GM12878 (cell line): ENCODE measurements at regions of chr6 and their contacts with region 1.

Region 1: GRCh38 chr6:35786810-35787209 is 6.0 kb downstream of the CLPSL1 start:
- DNase-seq: no peak
- ATAC-seq: no peak
- H3K4me3 ChIP-seq: no peak overlapping the region
- H3K27ac ChIP-seq: no peak overlapping the region
- H3K4me1 ChIP-seq: no peaks in the 10 kb centered on the region
- H3K27me3 ChIP-seq: peaks cover 1 to 4% of the 10 kb centered on the region in 2 experiments
- CTCF ChIP-seq: no peak
- EP300 ChIP-seq: no peak
- POLR2A ChIP-seq: no peak
- RAD21 ChIP-seq: no peak

Region 2: DNA sequence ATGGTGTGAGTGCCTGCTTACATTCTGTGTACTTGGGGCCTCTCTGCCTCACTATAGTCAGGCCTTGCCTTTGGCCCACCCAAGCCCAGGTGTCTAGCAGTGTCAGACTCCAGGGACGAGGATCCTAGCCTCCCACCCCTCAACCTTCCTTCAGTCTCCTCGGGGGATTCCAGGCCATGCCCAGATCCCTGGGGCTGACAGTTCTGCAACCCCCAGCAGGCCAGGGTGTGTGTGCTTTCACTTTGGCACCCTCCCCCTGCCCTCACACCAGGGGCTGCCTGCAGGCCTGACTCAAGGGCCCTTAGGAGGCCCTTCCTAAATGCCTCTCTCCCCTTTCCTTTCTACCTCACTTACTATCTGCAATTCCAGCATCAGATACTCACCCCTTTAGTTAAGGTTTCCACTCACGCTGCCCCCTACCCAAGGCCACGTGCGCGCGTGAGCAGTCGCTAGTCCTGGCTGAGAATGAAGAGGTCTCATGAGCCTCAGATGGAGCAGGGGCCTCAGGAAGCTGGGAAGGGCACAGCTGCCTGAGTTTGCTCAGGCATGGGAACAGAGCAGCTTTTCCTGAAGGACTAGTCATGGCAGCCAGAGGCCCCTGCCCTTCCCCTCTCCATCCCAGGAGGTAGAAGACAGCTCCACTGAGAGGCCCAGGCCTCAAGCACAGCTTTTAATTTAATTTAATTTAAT is 11.2 kb after region 1 on chr6:
- CTCF ChIA-PET with region 1: interaction called, 4 read pairs
- POLR2A ChIA-PET with region 1: no interaction called
- RAD21 ChIA-PET with region 1: interaction called, 6 read pairs
- SMC1A ChIA-PET with region 1: no interaction called
- in situ Hi-C with region 1: no loop called
- intact Hi-C with region 1: loop called (anchors 1 kb)
- DNase-seq: no peak
- ATAC-seq: no peak
- H3K4me3 ChIP-seq: no peak overlapping the region
- H3K27ac ChIP-seq: no peak overlapping the region
- H3K4me1 ChIP-seq: no peaks in the 10 kb centered on the region
- H3K27me3 ChIP-seq: 0 out of 4 replicates have a peak, but pooled peaks cover 0 to 1% of the 10 kb centered on the region in 2 experiments
- CTCF ChIP-seq: no peak
- EP300 ChIP-seq: no peak
- POLR2A ChIP-seq: no peak
- RAD21 ChIP-seq: no peak

Region 3: DNA sequence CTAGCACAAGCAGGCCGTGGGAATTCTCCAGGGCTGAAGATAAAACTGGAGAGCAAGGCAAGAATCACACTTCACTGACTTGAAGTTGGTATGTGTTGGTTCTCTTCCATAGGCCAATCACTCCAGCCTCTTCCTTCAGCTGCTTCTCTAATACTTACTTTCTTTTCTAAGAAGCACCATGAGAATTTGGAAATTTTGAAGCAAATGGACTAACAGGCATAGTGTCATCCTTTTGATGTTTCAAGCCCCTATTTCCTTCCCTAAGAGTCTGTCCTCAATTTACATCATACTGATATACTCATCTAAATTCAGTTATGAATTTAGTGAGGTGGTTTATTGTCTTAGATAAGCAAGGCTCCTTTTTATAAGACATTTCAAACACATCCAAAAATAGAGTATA is 213.6 kb after region 1 on chr6:
- CTCF ChIA-PET with region 1: no interaction called
- POLR2A ChIA-PET with region 1: no interaction called
- RAD21 ChIA-PET with region 1: no interaction called
- SMC1A ChIA-PET with region 1: no interaction called
- in situ Hi-C with region 1: no loop called
- intact Hi-C with region 1: no loop called
- DNase-seq: no peak
- ATAC-seq: no peak
- H3K4me3 ChIP-seq: no peak overlapping the region
- H3K27ac ChIP-seq: no peak overlapping the region
- H3K4me1 ChIP-seq: no peaks in the 10 kb centered on the region
- H3K27me3 ChIP-seq: no peaks in the 10 kb centered on the region
- CTCF ChIP-seq: no peak
- EP300 ChIP-seq: no peak
- POLR2A ChIP-seq: no peak
- RAD21 ChIP-seq: no peak